ENCODE measurements at regions of chr1 and their contacts with region 1.

Region 1: GRCh38 chr1:106534621-106535020 is 521.9 kb upstream of the PRMT6 start:
- DNase-seq: no peak
- ATAC-seq: no peak
- H3K4me3 Mint-ChIP-seq: no peak overlapping the region
- H3K27ac Mint-ChIP-seq: no peak overlapping the region
- H3K4me1 Mint-ChIP-seq: no peaks in the 10 kb centered on the region
- H3K27me3 Mint-ChIP-seq: no peaks in the 10 kb centered on the region

Region 2: GRCh38 chr1:106489993-106490392 is 44.6 kb before region 1 on chr1:
- CTCF ChIA-PET with region 1: no interaction called
- POLR2A ChIA-PET with region 1: no interaction called
- intact Hi-C with region 1: loop called in 1 of 2 experiments (anchors 1 kb)
- DNase-seq: no peak
- ATAC-seq: no peak
- H3K4me3 Mint-ChIP-seq: no peak overlapping the region
- H3K27ac Mint-ChIP-seq: no peak overlapping the region
- H3K4me1 Mint-ChIP-seq: no peaks in the 10 kb centered on the region
- H3K27me3 Mint-ChIP-seq: no peaks in the 10 kb centered on the region

Region 3: DNA sequence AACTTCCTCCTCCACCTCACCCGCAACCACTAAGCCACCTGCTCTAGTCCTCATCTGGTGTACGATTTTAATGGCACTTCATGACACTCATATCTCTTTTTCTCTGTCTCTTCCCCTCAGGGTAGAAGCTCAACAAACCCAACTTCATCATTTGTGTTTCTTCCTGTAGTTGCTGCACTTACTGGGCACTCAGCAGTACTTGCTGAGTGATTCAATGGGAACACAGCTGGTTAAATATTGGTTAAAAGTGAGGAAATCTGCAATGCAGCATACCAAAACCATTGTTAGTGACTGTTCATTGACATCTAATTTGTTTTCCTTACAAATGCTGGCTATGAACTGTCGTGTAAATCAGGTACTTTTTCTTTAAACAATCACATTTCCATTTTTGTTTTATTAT is 19.2 kb before region 1 on chr1:
- CTCF ChIA-PET with region 1: no interaction called
- POLR2A ChIA-PET with region 1: no interaction called
- intact Hi-C with region 1: no loop called
- DNase-seq: no peak
- ATAC-seq: no peak
- H3K4me3 Mint-ChIP-seq: no peak overlapping the region
- H3K27ac Mint-ChIP-seq: no peak overlapping the region
- H3K4me1 Mint-ChIP-seq: no peaks in the 10 kb centered on the region
- H3K27me3 Mint-ChIP-seq: no peaks in the 10 kb centered on the region

Region 4: DNA sequence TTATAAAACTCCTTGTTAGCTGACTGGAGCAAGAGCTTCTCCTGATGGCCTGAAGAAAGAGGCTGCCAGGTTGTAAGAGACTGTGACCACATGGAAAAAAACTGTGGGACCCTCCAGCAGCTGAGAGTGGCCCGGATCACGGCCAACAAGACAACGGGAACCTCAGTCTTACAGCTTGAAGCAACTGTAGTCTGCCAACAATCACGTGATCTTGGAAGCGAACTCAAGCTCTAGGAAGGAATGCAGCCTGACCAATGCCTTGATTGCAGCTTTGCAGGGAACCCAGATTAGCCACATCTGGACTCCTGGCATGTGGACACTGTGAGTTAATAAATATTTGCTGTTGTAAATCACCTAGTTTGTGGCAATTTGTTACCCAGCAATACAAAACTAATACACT is 79.2 kb after region 1 on chr1:
- CTCF ChIA-PET with region 1: no interaction called
- POLR2A ChIA-PET with region 1: no interaction called
- intact Hi-C with region 1: no loop called
- DNase-seq: no peak
- ATAC-seq: no peak
- H3K4me3 Mint-ChIP-seq: no peak overlapping the region
- H3K27ac Mint-ChIP-seq: no peak overlapping the region
- H3K4me1 Mint-ChIP-seq: no peaks in the 10 kb centered on the region
- H3K27me3 Mint-ChIP-seq: no peaks in the 10 kb centered on the region

Region 5: DNA sequence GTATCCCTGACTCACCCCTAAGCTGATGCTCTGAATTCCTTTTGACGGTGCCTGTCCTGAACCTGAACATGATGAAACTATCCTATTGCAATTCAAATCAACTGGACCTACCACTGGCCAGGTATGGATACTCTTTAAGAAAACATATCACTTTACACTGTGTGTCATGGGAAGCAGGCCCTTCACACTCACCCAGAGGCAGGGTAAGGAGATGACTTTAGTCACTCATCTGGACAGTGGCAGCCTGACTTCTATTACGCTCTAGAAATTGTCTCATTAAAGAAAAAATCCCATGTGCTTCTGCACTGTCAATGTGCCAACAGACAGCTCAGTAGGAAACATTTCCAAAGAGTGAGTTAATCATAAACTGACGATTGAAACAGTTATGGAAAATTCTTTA is 1336.1 kb after region 1 on chr1:
- CTCF ChIA-PET with region 1: no interaction called
- POLR2A ChIA-PET with region 1: interaction called, 12 read pairs
- intact Hi-C with region 1: no loop called
- DNase-seq: no peak
- ATAC-seq: no peak
- H3K4me3 Mint-ChIP-seq: no peak overlapping the region
- H3K27ac Mint-ChIP-seq: no peak overlapping the region
- H3K4me1 Mint-ChIP-seq: peaks cover 29% of the 10 kb centered on the region
- H3K27me3 Mint-ChIP-seq: no peaks in the 10 kb centered on the region

Measured in activated CD4-positive, alpha-beta T cell treated with anti-CD3 and anti-CD28 coated beads for 36 hours (primary cell).